ENCODE measurements at regions of chr1 and their contacts with region 1.

Region 1: GRCh38 chr1:54070171-54070837 is 16.9 kb downstream of the TCEANC2 start:
- DNase-seq: no peak
- ATAC-seq: peak; percentile 53 to 73 (median 64)
- H3K4me3 ChIP-seq: no peak overlapping the region
- H3K27ac ChIP-seq: no peak overlapping the region
- H3K4me1 ChIP-seq: no peaks in the 10 kb centered on the region
- H3K27me3 ChIP-seq: no peaks in the 10 kb centered on the region
- CTCF ChIP-seq: peak; percentile 40 to 92 (median 76)

Region 2: GRCh38 chr1:54199765-54200518 is 129.6 kb after region 1 on chr1 and contains the starts of genes CYB5RL and MRPL37:
- intact Hi-C with region 1: loop called in 1 of 10 experiments (anchors 5 kb)
- DNase-seq: peak; percentile 85 to 98
- ATAC-seq: peak; percentile 97 to 100 (median 99)
- H3K4me3 ChIP-seq: peak within 1 kb of the TSS; percentile 68 to 100 (median 84)
- H3K27ac ChIP-seq: peak within 1 kb of the TSS in 9 of 10 donors; percentile 60 to 90 (median 81)
- H3K4me1 ChIP-seq: peaks cover 6 to 32% (median 20%) of the 10 kb centered on the region in 9 donors
- H3K27me3 ChIP-seq: no peaks in the 10 kb centered on the region
- CTCF ChIP-seq: no peak
- total RNA-seq, gene CYB5RL: 3.2 to 8.3 (median 5.8) TPM
- total RNA-seq, gene MRPL37: 82.2 to 97.4 (median 90.2) TPM

Region 3: DNA sequence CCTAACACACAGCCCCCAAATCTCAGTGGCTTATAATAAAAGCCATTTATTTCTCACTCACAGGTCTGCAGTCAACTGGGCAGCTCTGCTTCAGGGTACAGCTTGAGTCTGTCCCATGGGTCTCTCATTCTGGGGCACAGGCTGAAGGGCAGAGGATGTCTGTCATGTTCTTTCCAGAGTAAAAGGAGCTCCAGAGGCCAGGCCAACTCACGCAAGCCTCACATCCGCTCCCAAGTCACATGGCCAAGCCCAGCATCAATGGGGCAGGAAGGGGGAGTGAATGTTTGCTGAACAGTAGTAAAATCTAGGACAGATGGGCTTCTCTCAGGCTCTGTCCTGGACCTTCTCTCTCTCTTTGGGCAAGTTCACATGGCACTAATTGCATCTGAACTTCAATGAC is 343.0 kb after region 1 on chr1:
- intact Hi-C with region 1: loop called in 3 of 10 experiments (anchors 1 to 10 kb)
- DNase-seq: peak; percentile 36 to 68
- ATAC-seq: peak; percentile 56 to 91 (median 85)
- H3K4me3 ChIP-seq: peak overlapping the region in 2 of 10 donors; percentile 2 to 6
- H3K27ac ChIP-seq: peak overlapping the region in 9 of 10 donors; percentile 2 to 67 (median 31)
- H3K4me1 ChIP-seq: peaks cover 0 to 27% (median 22%) of the 10 kb centered on the region in 9 donors
- H3K27me3 ChIP-seq: no peaks in the 10 kb centered on the region
- CTCF ChIP-seq: no peak

Region 4: DNA sequence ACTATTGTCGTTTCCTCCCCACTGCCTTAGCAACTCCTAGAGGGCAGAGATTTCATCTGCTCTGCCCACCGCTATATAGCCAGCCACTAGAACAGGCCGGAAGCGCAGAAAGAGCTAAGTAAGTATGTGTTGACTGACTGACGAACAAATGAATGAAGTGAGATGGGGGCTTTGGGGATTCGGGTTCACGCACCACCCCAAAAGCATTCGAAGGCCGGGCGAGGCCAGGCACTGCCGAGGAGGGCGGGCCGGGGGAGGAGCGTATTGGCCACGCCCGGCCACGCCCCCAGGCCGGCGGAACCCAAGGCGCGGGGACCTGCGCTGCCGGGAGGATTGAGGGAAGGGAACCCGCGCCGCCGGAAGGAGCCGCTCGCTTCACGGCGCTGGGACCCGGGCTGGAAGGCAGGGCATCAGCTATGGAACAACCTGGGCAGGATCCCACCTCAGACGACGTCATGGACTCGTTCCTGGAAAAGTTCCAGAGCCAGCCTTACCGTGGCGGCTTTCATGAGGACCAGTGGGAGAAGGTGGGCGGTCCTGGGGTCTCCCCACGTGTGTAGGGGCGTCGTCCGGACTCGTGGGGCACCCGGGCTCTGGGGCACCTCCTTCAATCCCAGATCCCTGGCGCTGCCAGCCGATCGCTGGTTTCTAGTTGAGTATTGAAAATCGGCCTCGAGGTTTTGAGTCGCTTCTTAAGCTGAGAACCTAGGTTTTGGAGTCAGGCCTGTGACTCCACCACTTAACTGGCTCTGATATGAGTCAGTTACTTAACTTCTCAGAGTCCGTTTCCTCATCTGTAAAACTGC is 645.4 kb after region 1 on chr1 and contains the start of gene TTC4:
- intact Hi-C with region 1: loop called in 2 of 10 experiments (anchors 10 kb)
- DNase-seq: peak; percentile 75 to 86
- ATAC-seq: peak; percentile 97 to 99 (median 99)
- H3K4me3 ChIP-seq: peak within 1 kb of the TSS; percentile 65 to 99 (median 80)
- H3K27ac ChIP-seq: peak within 1 kb of the TSS in 9 of 10 donors; percentile 54 to 85 (median 78)
- H3K4me1 ChIP-seq: peaks cover 0 to 20% (median 13%) of the 10 kb centered on the region in 9 donors
- H3K27me3 ChIP-seq: no peaks in the 10 kb centered on the region
- CTCF ChIP-seq: peak in 3 of 9 donors; percentile 17 to 26 (median 19)
- total RNA-seq, gene TTC4: 12.0 to 17.0 (median 15.1) TPM

Region 5: GRCh38 chr1:54800899-54801759 is 730.8 kb after region 1 on chr1 and contains the start of gene TTC22:
- intact Hi-C with region 1: loop called in 3 of 10 experiments (anchors 10 kb)
- DNase-seq: no peak
- ATAC-seq: peak in 6 of 8 donors; percentile 58 to 76 (median 66)
- H3K4me3 ChIP-seq: peak within 1 kb of the TSS in 9 of 10 donors; percentile 1 to 62 (median 35)
- H3K27ac ChIP-seq: peak within 1 kb of the TSS in 1 of 10 donors; percentile 74
- H3K4me1 ChIP-seq: peaks cover 0 to 39% (median 9%) of the 10 kb centered on the region in 9 donors
- H3K27me3 ChIP-seq: peaks cover 0 to 59% (median 34%) of the 10 kb centered on the region in 7 donors
- CTCF ChIP-seq: peak in 4 of 9 donors; percentile 28 to 37 (median 34)
- total RNA-seq, gene TTC22: 0.13 to 1.0 (median 0.17) TPM in 5 of 10 donors, not detected in the others

Region 6: DNA sequence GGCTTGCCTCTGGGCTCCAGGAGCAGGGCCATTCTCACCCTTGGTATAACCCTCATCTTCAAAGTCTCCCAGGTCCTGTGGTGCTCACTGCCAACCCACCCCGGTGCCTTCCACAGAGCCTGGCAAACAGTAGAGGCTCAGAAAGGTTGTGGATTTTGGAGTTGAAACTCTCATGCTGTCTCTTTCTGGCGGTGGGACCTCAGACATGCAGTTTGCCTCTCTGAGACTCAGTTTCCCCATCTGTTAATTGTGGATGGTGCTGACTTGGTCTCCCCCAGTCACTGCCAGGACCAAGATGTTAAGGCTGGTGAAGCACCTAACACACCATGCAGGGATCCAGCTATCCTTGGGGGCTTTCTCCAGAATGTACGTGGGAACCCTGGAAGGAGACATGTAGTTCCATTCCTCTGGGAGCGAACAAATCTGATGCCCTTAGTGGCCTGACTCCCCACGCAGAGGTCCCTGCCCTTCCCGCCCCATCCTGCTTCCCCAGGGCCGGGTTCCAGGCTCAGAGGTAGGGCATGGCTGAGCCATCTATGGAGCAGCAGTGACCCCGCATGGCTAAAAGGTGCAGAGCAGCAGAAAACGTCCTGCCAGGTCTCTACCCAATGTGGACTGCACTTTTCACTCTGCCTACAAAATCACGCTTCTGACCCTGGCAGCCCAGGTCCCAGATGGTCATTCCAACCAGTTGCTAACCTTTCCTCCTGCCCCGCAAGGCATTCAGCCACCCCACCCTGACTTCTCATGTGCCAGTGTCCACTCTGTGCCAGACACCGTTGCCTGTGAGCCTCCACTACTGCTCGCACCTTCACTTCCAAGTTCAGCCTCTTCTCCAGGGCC is 740.0 kb after region 1 on chr1:
- intact Hi-C with region 1: loop called in 4 of 10 experiments (anchors 5 to 10 kb)
- DNase-seq: peak; percentile 30 to 60
- ATAC-seq: peak; percentile 77 to 90 (median 82)
- H3K4me3 ChIP-seq: no peak overlapping the region
- H3K27ac ChIP-seq: no peak overlapping the region
- H3K4me1 ChIP-seq: peaks cover 0 to 4% (median 0%) of the 10 kb centered on the region in 9 donors
- H3K27me3 ChIP-seq: peaks cover 0 to 8% (median 0%) of the 10 kb centered on the region in 7 donors
- CTCF ChIP-seq: peak; percentile 45 to 84 (median 81)